Activated CD4-positive, alpha-beta memory T cell treated with anti-CD3 and anti-CD28 coated beads for 36 hours (primary cell): ENCODE measurements at regions of chr7 and their contacts with region 1.

Region 1: GRCh38 chr7:51123322-51124029 is 193.1 kb downstream of the COBL start:
- DNase-seq: peak; percentile 92
- H3K4me3 Mint-ChIP-seq: peak overlapping the region; percentile 53
- H3K27ac Mint-ChIP-seq: peak overlapping the region; percentile 96
- H3K4me1 Mint-ChIP-seq: peaks cover 40% of the 10 kb centered on the region
- H3K27me3 Mint-ChIP-seq: peaks cover 1% of the 10 kb centered on the region

Region 2: DNA sequence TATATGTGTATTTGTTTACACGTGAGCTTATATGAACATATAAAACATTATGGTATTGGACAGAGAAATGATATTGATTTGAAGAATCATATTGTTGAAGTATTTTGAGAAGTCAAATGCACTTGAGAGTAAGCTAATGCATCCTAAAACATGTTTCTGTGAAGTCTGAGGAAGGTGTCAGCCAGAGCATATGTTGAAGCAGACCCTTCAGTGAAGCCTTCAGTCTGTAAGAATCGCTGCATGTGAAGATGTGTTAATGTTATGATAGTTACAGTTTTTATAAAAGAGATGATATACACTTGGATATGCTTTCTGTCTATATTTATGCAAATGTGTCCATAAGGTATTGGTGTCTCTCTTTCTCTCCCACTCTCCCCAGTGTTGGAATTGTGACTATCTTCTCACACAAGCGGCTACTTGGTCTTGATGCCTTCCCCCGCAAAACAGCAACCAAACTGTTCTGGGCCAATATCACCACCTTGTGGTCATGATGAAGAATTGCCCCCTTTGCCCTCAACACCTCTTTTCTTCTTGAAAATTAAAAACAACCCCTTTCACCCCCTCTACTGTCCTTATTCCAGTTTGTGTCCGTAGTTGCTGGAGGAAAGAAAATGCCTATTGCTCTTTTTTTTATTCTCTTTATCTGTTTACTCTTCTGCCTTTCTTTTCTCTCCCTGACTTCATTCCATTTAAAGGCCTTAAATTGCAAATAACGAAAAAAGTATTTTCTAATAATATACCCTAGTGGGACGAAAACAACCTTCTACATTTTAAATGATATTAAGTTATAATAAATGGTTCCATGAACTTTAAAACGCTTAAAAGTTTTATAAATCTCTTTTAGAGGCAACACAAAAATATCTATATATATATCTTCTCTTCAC is 754.1 kb before region 1 on chr7:
- CTCF ChIA-PET with region 1: no interaction called
- POLR2A ChIA-PET with region 1: no interaction called
- intact Hi-C with region 1: loop called (anchors 10 kb)
- DNase-seq: peak; percentile 56
- H3K4me3 Mint-ChIP-seq: no peak overlapping the region
- H3K27ac Mint-ChIP-seq: peak overlapping the region; percentile 93
- H3K4me1 Mint-ChIP-seq: peaks cover 97% of the 10 kb centered on the region
- H3K27me3 Mint-ChIP-seq: no peaks in the 10 kb centered on the region

Region 3: DNA sequence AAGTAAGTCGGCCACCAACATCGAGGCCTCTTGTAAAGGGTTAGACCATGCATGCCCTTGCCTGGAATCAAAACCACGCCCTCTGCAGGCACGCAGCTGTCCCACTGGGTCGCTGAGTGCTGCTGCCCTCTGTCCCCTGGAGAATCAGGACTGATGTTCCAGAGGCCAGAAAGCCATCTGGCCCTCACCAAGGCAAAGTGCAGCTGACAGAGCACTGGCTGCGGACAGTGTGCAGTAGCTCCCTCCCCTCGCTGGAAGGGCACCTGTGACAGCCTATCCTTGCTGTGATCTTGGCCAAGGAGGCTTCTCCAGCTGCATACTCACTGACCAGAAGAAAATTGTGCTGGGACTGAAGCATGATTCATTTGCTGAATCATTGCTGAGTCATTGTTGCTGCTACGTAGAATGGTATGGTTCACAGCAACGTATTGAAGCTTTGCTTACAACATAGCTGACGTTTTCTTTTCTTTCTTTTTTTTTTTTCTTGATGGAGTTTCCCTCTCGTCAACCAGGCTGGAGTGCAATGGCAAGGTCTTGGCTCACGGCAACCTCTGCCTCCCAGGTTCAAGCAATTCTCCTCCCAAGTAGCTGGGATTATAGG is 588.7 kb before region 1 on chr7:
- CTCF ChIA-PET with region 1: no interaction called
- POLR2A ChIA-PET with region 1: no interaction called
- intact Hi-C with region 1: loop called (anchors 5 kb)
- DNase-seq: peak; percentile 33
- H3K4me3 Mint-ChIP-seq: no peak overlapping the region
- H3K27ac Mint-ChIP-seq: no peak overlapping the region
- H3K4me1 Mint-ChIP-seq: peaks cover 27% of the 10 kb centered on the region
- H3K27me3 Mint-ChIP-seq: peaks cover 7% of the 10 kb centered on the region

Region 4: DNA sequence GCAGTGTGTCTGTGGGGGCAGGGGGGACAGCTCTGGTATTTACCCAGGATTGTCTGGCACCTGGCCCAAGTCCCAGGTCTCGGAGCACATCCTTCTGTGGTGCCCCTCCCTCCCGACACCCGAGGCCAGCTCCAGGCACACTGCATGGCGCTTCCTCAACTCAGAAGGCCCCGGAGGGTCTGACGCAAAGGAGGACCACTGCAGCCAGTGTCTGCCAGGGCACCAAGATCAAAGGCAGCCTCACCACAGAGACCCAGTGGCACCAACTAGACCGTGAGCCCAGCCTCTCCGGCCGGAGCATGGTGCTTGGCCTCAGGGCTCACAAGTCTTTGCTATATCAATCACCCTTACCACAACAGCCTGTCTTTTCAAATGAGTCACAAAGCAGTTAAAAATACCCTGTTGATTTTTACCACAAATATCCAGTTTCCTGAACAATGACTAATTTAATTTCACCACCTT is 459.0 kb before region 1 on chr7:
- CTCF ChIA-PET with region 1: no interaction called
- POLR2A ChIA-PET with region 1: no interaction called
- intact Hi-C with region 1: loop called (anchors 1 kb)
- DNase-seq: peak; percentile 60
- H3K4me3 Mint-ChIP-seq: no peak overlapping the region
- H3K27ac Mint-ChIP-seq: no peak overlapping the region
- H3K4me1 Mint-ChIP-seq: peaks cover 66% of the 10 kb centered on the region
- H3K27me3 Mint-ChIP-seq: peaks cover 2% of the 10 kb centered on the region

Region 5: DNA sequence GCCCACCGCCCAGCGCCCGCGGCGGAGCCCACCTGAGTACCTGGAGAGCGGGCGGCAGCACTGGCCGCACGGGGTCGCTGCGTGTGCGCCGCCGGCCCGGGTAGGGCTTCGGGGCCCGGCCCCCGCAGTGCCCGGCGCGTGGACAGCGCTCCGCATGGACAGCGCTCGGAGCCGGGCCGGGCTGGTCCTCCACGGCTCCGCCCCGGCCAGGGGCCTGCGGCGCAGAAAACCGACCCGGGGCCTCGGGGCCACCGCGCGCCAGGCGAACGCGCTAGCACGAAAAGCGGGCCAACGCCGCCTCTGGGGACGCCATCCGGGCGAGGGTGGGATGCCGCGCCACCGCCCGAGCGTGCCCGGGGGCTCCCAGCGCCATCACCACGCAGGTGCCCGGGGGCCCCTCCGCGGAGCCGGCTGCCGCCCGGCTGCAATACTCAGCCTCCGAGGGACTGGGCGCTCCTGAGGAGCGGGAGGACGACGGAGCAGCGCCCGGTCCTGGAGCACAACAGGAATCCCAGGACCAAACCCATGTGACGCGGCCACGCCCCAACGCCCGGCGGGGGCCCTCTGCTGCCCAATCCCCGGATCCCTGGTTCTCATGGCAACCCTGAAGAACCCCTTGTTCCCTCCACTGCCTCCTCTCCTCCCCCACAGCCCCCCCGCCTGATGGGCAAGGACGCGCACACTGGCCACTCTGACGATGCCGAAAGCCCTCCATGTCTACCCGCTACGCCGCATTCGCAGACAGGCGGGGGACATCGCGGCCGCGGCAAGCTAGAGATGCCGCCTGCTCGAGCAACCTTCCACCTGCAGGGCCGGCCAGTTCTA is 340.9 kb before region 1 on chr7 and contains the start of gene GRB10:
- CTCF ChIA-PET with region 1: no interaction called
- POLR2A ChIA-PET with region 1: no interaction called
- intact Hi-C with region 1: loop called (anchors 5 kb)
- DNase-seq: no peak
- H3K4me3 Mint-ChIP-seq: peak within 1 kb of the TSS; percentile 65
- H3K27ac Mint-ChIP-seq: no peak within 1 kb of the TSS
- H3K4me1 Mint-ChIP-seq: peaks cover 21% of the 10 kb centered on the region
- H3K27me3 Mint-ChIP-seq: peaks cover 7% of the 10 kb centered on the region
- total RNA-seq, gene GRB10: 8.4 to 9.9 TPM

Region 6: DNA sequence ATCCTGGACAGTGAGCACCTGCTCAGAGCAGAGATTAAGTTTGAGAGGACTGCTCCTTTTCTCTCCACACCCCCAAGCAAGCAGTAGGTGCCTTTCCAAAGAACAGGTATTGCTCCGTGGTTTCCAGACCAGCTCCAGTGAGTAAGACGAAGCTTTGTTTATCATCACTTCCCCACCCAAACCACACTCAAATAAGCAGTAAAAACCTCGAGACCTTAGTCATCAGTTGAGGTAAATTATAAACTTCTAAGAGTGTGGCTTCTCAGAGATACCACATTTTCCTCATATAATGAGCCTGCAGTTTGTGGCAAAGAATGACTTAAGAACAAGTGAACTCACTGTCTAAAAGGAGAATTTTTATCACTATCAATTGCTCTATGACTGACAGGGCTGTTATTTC is 290.7 kb before region 1 on chr7:
- CTCF ChIA-PET with region 1: no interaction called
- POLR2A ChIA-PET with region 1: no interaction called
- intact Hi-C with region 1: loop called (anchors 1 kb)
- DNase-seq: peak; percentile 51
- H3K4me3 Mint-ChIP-seq: no peak overlapping the region
- H3K27ac Mint-ChIP-seq: no peak overlapping the region
- H3K4me1 Mint-ChIP-seq: peaks cover 17% of the 10 kb centered on the region
- H3K27me3 Mint-ChIP-seq: peaks cover 33% of the 10 kb centered on the region

Region 7: DNA sequence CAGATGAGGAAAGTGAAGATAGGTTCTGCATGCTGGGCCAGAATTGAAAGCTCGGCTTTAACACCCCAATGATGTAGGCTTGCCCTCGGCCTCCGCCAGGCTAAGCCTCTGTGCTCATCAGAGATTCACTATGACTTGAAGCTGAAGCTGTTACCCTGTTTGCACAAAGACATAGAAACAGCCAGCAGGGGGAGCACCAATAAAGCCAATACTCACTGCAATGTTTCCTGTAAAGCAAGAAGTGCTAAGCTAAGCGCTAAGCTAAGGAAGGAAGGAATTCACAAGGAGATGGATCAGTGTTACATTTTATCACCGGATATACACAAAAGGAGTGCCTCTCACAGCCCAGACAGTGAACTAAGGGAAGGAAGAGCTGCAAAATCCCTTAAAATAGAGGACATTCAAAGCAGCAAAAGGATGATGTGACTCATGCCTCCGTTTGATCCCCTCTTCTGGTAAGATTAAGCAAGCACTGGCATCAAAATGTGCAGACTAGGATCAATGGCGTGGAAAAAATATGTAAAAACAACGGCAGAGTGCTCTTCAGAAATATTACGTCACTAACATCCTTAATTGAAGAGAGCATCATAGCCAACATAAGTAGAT is 39.4 kb after region 1 on chr7:
- CTCF ChIA-PET with region 1: interaction called, 4 read pairs
- POLR2A ChIA-PET with region 1: no interaction called
- intact Hi-C with region 1: loop called (anchors 1 kb)
- DNase-seq: peak; percentile 84
- H3K4me3 Mint-ChIP-seq: no peak overlapping the region
- H3K27ac Mint-ChIP-seq: no peak overlapping the region
- H3K4me1 Mint-ChIP-seq: peaks cover 10% of the 10 kb centered on the region
- H3K27me3 Mint-ChIP-seq: peaks cover 21% of the 10 kb centered on the region

Region 8: GRCh38 chr7:52143219-52143618 is 1019.7 kb after region 1 on chr7:
- CTCF ChIA-PET with region 1: no interaction called
- POLR2A ChIA-PET with region 1: no interaction called
- intact Hi-C with region 1: no loop called
- DNase-seq: no peak
- H3K4me3 Mint-ChIP-seq: no peak overlapping the region
- H3K27ac Mint-ChIP-seq: no peak overlapping the region
- H3K4me1 Mint-ChIP-seq: no peaks in the 10 kb centered on the region
- H3K27me3 Mint-ChIP-seq: no peaks in the 10 kb centered on the region